IMR-90 (cell line): ENCODE measurements at regions of chr4 and their contacts with region 1.

Region 1: DNA sequence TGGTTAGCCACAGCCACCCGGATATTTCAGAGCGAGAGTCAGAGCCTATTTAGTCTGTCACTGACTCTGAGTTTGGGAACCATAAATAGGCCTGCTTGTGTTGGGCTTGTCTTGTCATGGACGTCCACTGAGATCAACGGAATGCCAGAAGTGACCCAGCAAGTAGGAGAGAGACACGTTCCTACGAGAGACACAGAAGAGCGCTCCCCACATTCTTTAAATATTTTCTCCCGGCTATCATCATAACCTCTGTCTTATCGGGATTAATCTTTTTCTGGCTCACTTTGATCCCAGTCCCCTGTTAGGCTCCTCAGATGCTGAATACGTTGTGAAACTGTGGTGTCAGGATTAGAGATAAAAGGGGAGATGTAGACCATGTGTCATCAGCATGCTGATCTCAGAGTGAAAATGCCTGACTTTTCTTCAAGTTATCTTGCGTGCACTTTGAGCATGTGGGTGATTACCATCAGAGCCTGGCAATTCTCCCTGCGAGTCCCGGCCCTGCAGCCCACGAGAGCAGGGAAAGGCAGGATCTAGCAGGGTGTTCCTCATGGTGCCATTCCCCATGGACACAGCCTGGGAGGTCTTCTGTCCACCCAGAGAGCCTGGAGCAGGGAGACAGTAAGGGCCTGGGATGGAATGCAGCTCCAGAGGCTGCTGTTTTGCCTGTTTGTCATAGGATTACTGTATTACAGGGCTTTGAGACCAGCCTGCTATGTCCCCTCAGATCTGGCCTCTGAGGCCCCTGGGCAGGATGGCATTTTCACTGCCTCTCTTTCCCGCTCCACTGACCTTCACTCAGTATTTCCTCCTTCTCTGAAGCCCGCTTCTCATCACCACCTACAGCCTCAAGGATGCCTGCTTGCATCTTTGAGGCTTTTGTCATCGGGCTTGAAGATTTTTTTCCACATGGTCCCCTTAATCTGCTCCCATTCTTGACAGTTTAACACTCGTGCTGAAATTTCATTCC is 2.8 kb upstream of the TENM3 start:
- DNase-seq: peak; percentile 89
- ATAC-seq: peak; percentile 73
- H3K4me3 ChIP-seq: no peak overlapping the region; the same call in 1 of the 2 replicates
- H3K27ac ChIP-seq: peak overlapping the region; percentile 69
- H3K4me1 ChIP-seq: peaks cover 19% of the 10 kb centered on the region
- H3K27me3 ChIP-seq: no peaks in the 10 kb centered on the region
- CTCF ChIP-seq: no peak
- POLR2A ChIP-seq: peak; percentile 20; the same call in 1 of the 2 replicates
- RAD21 ChIP-seq: no peak; the same call in 1 of the 2 replicates

Region 2: DNA sequence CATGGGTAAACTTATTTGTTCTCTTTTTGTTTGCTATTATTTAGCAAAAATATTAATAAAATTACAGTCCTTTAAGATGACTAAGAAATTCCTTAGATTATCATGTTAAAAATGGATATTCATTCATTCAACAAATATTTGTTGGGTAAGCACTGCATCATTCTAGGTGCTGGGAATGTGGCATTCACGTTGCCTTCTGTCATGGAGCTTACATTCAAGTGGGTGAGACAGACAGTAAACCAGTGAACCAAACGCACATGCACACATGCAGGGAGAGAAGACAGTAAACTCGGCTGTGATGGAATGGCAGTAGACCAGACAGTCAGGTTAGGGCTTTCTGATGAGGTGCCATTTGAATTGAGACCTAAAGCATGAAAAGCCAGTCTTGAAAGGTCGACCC is 1756.4 kb after region 1 on chr4:
- CTCF ChIA-PET with region 1: no interaction called
- POLR2A ChIA-PET with region 1: no interaction called
- dilution Hi-C with region 1: no loop called
- in situ Hi-C with region 1: no loop called
- intact Hi-C with region 1: loop called (anchors 10 kb)
- DNase-seq: peak; percentile 90
- ATAC-seq: peak; percentile 66
- H3K4me3 ChIP-seq: no peak overlapping the region
- H3K27ac ChIP-seq: peak overlapping the region; percentile 79
- H3K4me1 ChIP-seq: peaks cover 17% of the 10 kb centered on the region
- H3K27me3 ChIP-seq: no peaks in the 10 kb centered on the region
- CTCF ChIP-seq: no peak
- POLR2A ChIP-seq: no peak
- RAD21 ChIP-seq: no peak